Right cardiac atrium (tissue), 5 donors: ENCODE measurements at regions of chr1 and their contacts with region 1.

Region 1: DNA sequence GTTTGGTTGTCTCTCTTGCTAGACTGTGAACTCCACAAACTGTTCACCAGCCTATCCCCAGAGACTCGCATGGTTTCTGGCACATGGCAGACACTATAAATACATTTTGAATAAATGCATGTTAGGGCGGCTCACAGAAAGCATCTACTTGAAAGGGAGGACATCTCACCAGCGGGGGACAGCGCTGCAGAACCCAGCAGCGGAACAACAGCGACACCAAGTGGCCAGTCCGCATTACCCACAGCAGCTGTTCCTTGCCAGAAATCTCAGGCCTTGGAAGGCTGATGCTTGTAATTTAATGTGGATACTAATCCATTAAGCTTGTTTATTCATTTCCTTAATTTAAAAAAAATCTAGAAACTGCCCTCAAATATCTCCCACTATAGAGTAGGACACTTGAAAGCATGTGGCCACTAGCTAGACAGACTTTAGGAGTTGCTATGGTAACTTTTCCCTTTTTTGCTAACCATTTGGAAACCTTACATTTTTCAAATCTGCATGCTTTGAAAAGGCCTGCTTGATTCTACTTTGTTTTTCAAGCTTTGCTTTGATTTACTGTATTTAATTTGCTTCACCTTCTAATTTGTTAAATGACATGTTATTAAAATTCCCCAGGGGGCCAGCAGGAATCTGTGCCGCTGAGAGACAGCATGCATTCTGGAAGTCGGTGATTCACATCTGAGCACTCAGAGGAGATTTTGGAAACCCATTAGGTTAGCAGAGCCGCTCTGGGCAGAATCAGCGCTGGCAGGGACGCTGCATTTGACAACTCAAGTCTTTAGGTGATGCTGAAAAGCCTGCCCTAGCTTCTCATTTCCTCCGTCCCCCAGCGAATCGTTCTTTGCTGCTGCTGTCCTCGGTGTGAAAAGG is 63.5 kb upstream of the SSX2IP start:
- DNase-seq: peak; percentile 62 to 88 (median 79)
- ATAC-seq: peak; percentile 83 to 88
- H3K4me3 ChIP-seq: no peak overlapping the region
- H3K27ac ChIP-seq: no peak overlapping the region
- H3K4me1 ChIP-seq: no peaks in the 10 kb centered on the region
- H3K27me3 ChIP-seq: no peaks in the 10 kb centered on the region

Region 2: GRCh38 chr1:84668185-84668584 is 85.6 kb before region 1 on chr1:
- intact Hi-C with region 1: loop called in 1 of 4 experiments (anchors 10 kb)
- DNase-seq: no peak
- ATAC-seq: no peak
- H3K4me3 ChIP-seq: no peak overlapping the region
- H3K27ac ChIP-seq: no peak overlapping the region
- H3K4me1 ChIP-seq: no peaks in the 10 kb centered on the region
- H3K27me3 ChIP-seq: no peaks in the 10 kb centered on the region